ENCODE measurements at regions of chr10 and their contacts with region 1.

Region 1: GRCh38 chr10:69092959-69093850 is 5.3 kb downstream of the SRGN start:
- DNase-seq: peak; percentile 94
- H3K4me3 Mint-ChIP-seq: peak overlapping the region; percentile 46
- H3K27ac Mint-ChIP-seq: peak overlapping the region; percentile 82
- H3K4me1 Mint-ChIP-seq: peaks cover 62% of the 10 kb centered on the region
- H3K27me3 Mint-ChIP-seq: no peaks in the 10 kb centered on the region

Region 2: DNA sequence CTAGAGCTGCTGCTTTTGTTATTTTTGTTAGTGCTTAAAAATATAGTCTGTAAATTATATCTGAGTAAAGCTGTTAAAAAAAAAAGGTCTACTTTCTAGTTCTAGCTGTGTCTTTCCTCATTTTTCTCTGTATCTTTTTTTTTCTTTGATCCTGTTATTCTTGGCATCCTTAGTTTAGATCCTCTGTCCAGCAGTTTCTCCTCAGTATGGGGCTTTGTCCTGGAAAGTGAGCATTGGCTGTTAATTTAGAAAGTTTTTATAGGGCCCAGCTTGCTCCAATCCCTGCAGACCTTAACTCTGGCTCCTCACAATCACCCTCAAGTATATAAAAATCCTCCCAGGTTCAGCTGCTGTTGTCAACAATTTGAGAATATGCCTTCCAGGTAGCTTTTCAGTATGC is 168.6 kb before region 1 on chr10:
- CTCF ChIA-PET with region 1: no interaction called
- POLR2A ChIA-PET with region 1: interaction called, 13 read pairs
- DNase-seq: no peak
- H3K4me3 Mint-ChIP-seq: no peak overlapping the region
- H3K27ac Mint-ChIP-seq: no peak overlapping the region
- H3K4me1 Mint-ChIP-seq: peaks cover 7% of the 10 kb centered on the region
- H3K27me3 Mint-ChIP-seq: no peaks in the 10 kb centered on the region

Region 3: GRCh38 chr10:68988530-68989316 is 104.5 kb before region 1 on chr10 and contains the start of gene KIFBP:
- CTCF ChIA-PET with region 1: interaction called, 10 read pairs
- POLR2A ChIA-PET with region 1: interaction called, 3 read pairs
- DNase-seq: peak; percentile 91
- H3K4me3 Mint-ChIP-seq: peak within 1 kb of the TSS; percentile 96
- H3K27ac Mint-ChIP-seq: peak within 1 kb of the TSS; percentile 96
- H3K4me1 Mint-ChIP-seq: peaks cover 48% of the 10 kb centered on the region
- H3K27me3 Mint-ChIP-seq: no peaks in the 10 kb centered on the region
- total RNA-seq, gene KIFBP: 13.8 to 15.1 TPM

Region 4: DNA sequence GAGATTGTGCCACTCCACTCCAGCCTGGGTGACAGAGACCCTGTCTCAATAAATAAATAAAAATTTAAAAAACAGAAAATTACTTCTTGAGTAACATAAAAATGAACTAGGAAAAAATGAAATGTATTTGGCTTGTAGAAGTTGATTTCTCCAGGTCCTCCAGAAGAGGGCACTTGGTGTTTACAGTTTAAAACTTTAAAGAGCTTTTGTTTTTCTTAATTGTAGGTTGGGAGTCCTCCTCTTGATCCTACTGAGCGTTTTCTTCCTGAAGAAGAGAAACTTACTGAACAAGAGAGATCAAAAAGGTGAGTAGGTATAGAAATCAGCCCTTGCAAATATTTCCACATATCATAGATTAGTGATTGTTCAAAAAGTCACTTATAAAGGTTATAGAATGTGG is 88.4 kb before region 1 on chr10:
- CTCF ChIA-PET with region 1: interaction called, 17 read pairs
- POLR2A ChIA-PET with region 1: no interaction called
- DNase-seq: peak; percentile 37
- H3K4me3 Mint-ChIP-seq: no peak overlapping the region
- H3K27ac Mint-ChIP-seq: no peak overlapping the region
- H3K4me1 Mint-ChIP-seq: peaks cover 4% of the 10 kb centered on the region
- H3K27me3 Mint-ChIP-seq: no peaks in the 10 kb centered on the region

Region 5: DNA sequence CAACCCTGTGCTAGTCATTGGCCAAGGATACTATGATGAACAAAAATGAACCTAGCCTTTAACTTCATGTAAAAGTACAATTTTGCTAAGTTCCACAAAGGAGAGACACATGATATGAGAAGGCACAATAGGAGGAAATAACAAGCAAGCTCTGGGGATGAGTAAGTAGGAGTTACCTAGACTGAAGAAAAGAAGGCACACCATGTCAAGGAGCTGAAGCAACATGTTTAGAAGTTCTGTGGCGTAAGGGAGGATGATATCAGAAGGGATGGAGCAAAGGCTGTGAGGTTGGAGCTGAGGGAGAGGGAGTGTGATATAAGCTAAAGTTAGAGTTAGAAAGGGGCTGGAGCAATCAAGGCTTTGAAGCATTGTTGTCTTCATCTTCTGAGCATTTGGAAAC is 79.0 kb before region 1 on chr10:
- CTCF ChIA-PET with region 1: interaction called, 15 read pairs
- POLR2A ChIA-PET with region 1: interaction called, 3 read pairs
- DNase-seq: no peak
- H3K4me3 Mint-ChIP-seq: no peak overlapping the region
- H3K27ac Mint-ChIP-seq: no peak overlapping the region
- H3K4me1 Mint-ChIP-seq: peaks cover 9% of the 10 kb centered on the region
- H3K27me3 Mint-ChIP-seq: no peaks in the 10 kb centered on the region